Panc1 (cell line): ENCODE measurements at regions of chr6 and their contacts with region 1.

Region 1: DNA sequence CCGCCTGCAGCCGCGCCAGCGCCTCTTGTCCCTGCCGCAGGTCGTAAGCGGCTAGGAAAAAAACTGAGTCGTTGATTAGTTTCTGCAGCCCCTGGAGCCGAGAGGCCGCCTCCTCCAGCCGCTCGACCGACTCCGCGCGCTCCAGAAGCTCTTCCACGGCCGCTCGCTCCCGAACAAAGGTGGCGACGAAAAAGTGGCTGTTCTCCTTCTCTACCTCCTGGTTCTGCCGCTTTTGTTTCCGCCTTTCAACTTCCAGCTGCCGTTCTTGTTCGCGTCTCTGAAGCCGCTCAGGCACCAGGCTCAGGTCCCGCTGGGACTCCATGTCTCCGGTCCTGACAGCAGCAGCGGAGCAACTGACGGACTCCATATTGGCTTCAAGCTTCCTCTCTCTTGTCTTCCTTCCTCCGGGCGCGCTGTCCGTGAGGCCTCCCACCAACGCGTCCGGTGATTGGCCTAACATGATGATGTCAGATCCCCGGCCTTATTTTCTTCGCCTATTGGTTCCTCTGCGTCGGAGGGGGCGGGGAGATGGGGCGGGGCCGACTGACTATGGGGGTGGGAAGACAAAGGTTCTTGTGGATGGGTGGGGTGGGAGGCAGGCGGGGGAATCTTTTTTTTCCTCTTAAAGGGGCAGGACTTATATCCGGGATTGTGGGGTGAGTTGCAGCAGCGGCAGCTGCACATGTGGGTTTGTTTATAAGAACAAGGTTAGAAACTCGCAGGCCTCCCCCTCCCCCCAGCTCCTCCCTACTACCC is at the start of gene TBCC:
- DNase-seq: peak; percentile 93
- ATAC-seq: peak; percentile 84
- H3K4me3 ChIP-seq: peak within 1 kb of the TSS; percentile 88 to 98
- H3K27ac ChIP-seq: peak within 1 kb of the TSS; percentile 99
- H3K4me1 ChIP-seq: peaks cover 19% of the 10 kb centered on the region
- H3K27me3 ChIP-seq: no peaks in the 10 kb centered on the region
- CTCF ChIP-seq: no peak
- total RNA-seq, gene TBCC: 25.7 TPM

Region 2: GRCh38 chr6:42555477-42556457 is 190.1 kb before region 1 on chr6:
- CTCF ChIA-PET with region 1: no interaction called
- POLR2A ChIA-PET with region 1: interaction called, 11 read pairs
- in situ Hi-C with region 1: no loop called
- intact Hi-C with region 1: no loop called
- DNase-seq: no peak
- ATAC-seq: no peak
- H3K4me3 ChIP-seq: no peak overlapping the region
- H3K27ac ChIP-seq: no peak overlapping the region
- H3K4me1 ChIP-seq: 0 out of 2 replicates have a peak, but pooled peaks cover 3% of the 10 kb centered on the region
- H3K27me3 ChIP-seq: no peaks in the 10 kb centered on the region
- CTCF ChIP-seq: no peak

Region 3: DNA sequence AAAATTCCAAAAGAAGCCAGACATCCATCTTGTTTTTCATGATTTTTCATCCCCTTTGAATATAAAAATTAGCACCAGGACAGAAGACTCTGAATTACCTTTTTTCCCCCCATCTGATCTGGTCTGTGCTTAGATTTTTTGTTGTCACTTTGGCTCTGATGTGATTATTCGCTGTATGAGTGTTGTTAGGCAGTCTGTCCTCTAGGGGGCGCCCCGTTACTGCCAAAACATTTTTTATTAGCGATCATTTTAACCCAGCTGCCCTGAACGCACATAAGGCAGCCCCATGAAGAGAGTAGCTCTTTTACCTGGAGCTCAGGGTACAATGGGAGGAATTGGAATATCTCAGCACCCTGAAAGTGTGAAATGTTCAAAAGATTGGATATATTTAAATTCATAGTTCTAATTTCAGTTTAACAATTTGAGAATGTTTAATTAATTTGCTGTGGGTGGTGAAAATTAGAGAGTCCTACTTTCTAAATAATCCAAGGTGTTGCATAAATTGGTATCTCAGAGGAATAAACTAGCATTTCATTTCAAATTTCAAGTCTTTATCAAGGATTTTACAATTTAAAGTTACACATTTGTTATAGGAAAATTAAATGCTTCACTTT is 84.2 kb before region 1 on chr6:
- CTCF ChIA-PET with region 1: no interaction called
- POLR2A ChIA-PET with region 1: interaction called, 10 read pairs
- in situ Hi-C with region 1: no loop called
- intact Hi-C with region 1: no loop called
- DNase-seq: peak; percentile 27
- ATAC-seq: peak; percentile 85
- H3K4me3 ChIP-seq: no peak overlapping the region
- H3K27ac ChIP-seq: no peak overlapping the region
- H3K4me1 ChIP-seq: no peaks in the 10 kb centered on the region
- H3K27me3 ChIP-seq: no peaks in the 10 kb centered on the region
- CTCF ChIP-seq: peak; percentile 95

Region 4: GRCh38 chr6:42769041-42769440 is 23.2 kb after region 1 on chr6:
- CTCF ChIA-PET with region 1: interaction called, 7 read pairs
- POLR2A ChIA-PET with region 1: interaction called, 28 read pairs
- in situ Hi-C with region 1: no loop called
- intact Hi-C with region 1: no loop called
- DNase-seq: no peak
- ATAC-seq: no peak
- H3K4me3 ChIP-seq: no peak overlapping the region
- H3K27ac ChIP-seq: no peak overlapping the region
- H3K4me1 ChIP-seq: peaks cover 13% of the 10 kb centered on the region
- H3K27me3 ChIP-seq: no peaks in the 10 kb centered on the region
- CTCF ChIP-seq: no peak

Region 5: GRCh38 chr6:42782622-42783176 is 36.8 kb after region 1 on chr6:
- CTCF ChIA-PET with region 1: interaction called, 9 read pairs
- POLR2A ChIA-PET with region 1: interaction called, 37 read pairs
- in situ Hi-C with region 1: loop called (anchors 5 kb)
- intact Hi-C with region 1: no loop called
- DNase-seq: no peak
- ATAC-seq: peak; percentile 78
- H3K4me3 ChIP-seq: peak overlapping the region; percentile 59 to 65
- H3K27ac ChIP-seq: peak overlapping the region; percentile 97
- H3K4me1 ChIP-seq: peaks cover 23% of the 10 kb centered on the region
- H3K27me3 ChIP-seq: no peaks in the 10 kb centered on the region
- CTCF ChIP-seq: no peak

Region 6: DNA sequence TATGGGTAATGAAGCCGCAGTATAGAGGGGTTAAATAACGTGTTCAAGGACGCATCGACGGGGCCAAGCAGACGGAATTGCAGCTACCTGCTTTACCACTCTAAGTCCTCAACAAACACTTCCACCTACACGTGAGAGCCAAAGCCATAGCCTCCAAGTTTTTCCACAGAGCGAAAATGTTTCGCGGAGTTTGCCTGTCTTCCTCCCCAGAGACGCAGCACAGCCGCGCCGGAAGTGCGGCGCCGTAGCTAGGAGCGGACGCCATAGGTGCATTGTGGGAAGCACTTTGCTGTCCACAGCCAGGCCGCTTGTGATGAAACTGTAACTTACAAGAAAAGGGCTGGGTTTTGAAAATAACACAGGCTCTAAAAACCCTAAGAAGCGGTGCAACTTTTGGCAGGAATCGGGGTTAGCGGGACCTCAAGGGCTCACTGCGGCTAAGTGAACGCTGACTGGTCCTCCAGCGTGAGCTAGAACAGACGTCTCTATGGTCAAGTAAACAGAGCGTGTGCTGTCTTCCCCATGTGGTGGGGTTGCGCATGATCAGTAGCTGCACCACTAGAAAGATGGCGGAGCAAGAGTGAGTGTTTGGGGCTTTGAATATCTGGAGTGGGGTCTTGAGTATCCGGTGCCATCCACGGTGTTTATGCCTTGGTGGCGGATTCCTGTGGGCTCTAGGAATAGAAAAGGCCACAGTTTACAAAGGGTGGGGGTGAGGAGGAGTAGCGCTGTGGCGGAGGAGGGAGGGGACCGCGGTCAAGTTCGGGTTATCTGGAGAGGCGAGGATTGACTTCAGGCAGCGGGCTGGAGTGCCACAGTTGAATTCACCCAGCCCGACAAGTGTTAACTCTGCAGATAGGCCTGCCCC is 133.7 kb after region 1 on chr6 and contains the start of gene RPL7L1:
- CTCF ChIA-PET with region 1: no interaction called
- POLR2A ChIA-PET with region 1: interaction called, 4 read pairs
- in situ Hi-C with region 1: no loop called
- intact Hi-C with region 1: loop called (anchors 5 kb)
- DNase-seq: peak; percentile 85
- ATAC-seq: peak; percentile 97
- H3K4me3 ChIP-seq: peak within 1 kb of the TSS; percentile 77 to 99
- H3K27ac ChIP-seq: peak within 1 kb of the TSS; percentile 99
- H3K4me1 ChIP-seq: peaks cover 4% of the 10 kb centered on the region; the same call in 1 of the 2 replicates
- H3K27me3 ChIP-seq: no peaks in the 10 kb centered on the region
- CTCF ChIP-seq: no peak
- total RNA-seq, gene RPL7L1: 109 TPM

Region 7: GRCh38 chr6:43129434-43130194 is 383.7 kb after region 1 on chr6:
- CTCF ChIA-PET with region 1: no interaction called
- POLR2A ChIA-PET with region 1: no interaction called
- in situ Hi-C with region 1: no loop called
- intact Hi-C with region 1: no loop called
- DNase-seq: no peak
- ATAC-seq: peak; percentile 91
- H3K4me3 ChIP-seq: no peak overlapping the region
- H3K27ac ChIP-seq: peak overlapping the region; percentile 44
- H3K4me1 ChIP-seq: peaks cover 33% of the 10 kb centered on the region
- H3K27me3 ChIP-seq: no peaks in the 10 kb centered on the region
- CTCF ChIP-seq: no peak; the same call in 1 of the 2 replicates

Region 8: GRCh38 chr6:43143235-43144124 is 397.6 kb after region 1 on chr6:
- CTCF ChIA-PET with region 1: no interaction called
- POLR2A ChIA-PET with region 1: no interaction called
- in situ Hi-C with region 1: no loop called
- intact Hi-C with region 1: loop called (anchors 10 kb)
- DNase-seq: no peak
- ATAC-seq: peak; percentile 97
- H3K4me3 ChIP-seq: no peak overlapping the region
- H3K27ac ChIP-seq: peak overlapping the region; percentile 60
- H3K4me1 ChIP-seq: peaks cover 17% of the 10 kb centered on the region
- H3K27me3 ChIP-seq: no peaks in the 10 kb centered on the region
- CTCF ChIP-seq: peak; percentile 97